Ovary (tissue), 10 donors: ENCODE measurements at regions of chr9 and their contacts with region 1.

Region 1: GRCh38 chr9:133715866-133716563 is 22.1 kb downstream of the SARDH start:
- DNase-seq: peak in 3 of 5 donors; percentile 44 to 58 (median 49)
- H3K4me3 ChIP-seq: no peak overlapping the region
- H3K27ac ChIP-seq: peak overlapping the region; percentile 18 to 54
- H3K4me1 ChIP-seq: peaks cover 18% of the 10 kb centered on the region
- H3K27me3 ChIP-seq: no peaks in the 10 kb centered on the region
- CTCF ChIP-seq: peak in 1 of 3 donors; percentile 43
- EP300 ChIP-seq: no peak
- POLR2A ChIP-seq: no peak

Region 2: DNA sequence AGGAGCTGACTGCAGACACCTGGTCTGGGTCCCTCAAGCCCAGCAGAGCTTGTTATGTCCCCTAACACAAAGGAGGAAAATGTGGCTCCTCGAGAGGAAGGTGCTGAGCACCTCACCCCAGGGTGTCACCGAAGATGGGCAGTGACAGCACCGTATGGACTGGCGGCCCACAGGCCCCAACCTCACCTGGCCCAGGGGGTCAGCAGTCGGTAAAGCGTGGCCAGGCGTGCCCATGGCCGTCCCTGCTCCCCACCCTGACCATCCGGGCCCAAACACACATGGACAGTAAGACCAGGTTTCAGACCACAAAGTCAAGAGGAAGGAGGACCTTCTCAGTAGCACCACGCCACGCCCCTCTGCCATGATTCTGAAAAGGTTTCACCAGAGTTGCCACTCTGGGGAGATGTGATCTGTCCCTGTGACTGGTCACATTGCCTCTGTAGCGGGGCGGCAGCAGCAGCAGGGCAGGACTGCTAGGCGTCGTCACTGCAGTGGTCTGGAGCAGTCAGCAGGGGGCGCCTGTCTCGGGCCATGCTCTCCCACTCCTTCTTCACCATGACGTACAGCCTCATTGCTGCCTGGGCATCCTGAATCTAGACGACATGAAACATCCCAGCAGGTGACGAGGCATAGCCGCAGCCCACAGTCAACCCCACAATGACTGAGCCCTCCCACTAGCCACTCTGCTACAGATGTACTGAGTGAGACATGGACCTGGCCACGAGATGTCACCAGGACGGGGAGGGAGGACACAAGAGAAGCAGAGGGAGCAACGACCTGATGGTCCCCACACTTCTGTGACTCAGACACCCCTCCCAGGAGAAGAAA is 309.3 kb before region 1 on chr9:
- intact Hi-C with region 1: loop called in 2 of 4 experiments (anchors 10 kb)
- DNase-seq: peak; percentile 53 to 79 (median 72)
- H3K4me3 ChIP-seq: no peak overlapping the region
- H3K27ac ChIP-seq: no peak overlapping the region
- H3K4me1 ChIP-seq: no peaks in the 10 kb centered on the region
- H3K27me3 ChIP-seq: no peaks in the 10 kb centered on the region
- CTCF ChIP-seq: peak; percentile 61 to 78 (median 73)
- EP300 ChIP-seq: no peak
- POLR2A ChIP-seq: no peak

Region 3: GRCh38 chr9:133509179-133510079 is 206.6 kb before region 1 on chr9:
- intact Hi-C with region 1: loop called in 1 of 4 experiments (anchors 10 kb)
- DNase-seq: peak in 1 of 5 donors; percentile 52
- H3K4me3 ChIP-seq: no peak overlapping the region
- H3K27ac ChIP-seq: no peak overlapping the region
- H3K4me1 ChIP-seq: peaks cover 27% of the 10 kb centered on the region
- H3K27me3 ChIP-seq: no peaks in the 10 kb centered on the region
- CTCF ChIP-seq: no peak
- EP300 ChIP-seq: no peak
- POLR2A ChIP-seq: no peak

Region 4: GRCh38 chr9:133589454-133590227 is 126.4 kb before region 1 on chr9:
- intact Hi-C with region 1: loop called in 1 of 4 experiments (anchors 10 kb)
- DNase-seq: no peak
- H3K4me3 ChIP-seq: no peak overlapping the region
- H3K27ac ChIP-seq: no peak overlapping the region
- H3K4me1 ChIP-seq: peaks cover 1% of the 10 kb centered on the region
- H3K27me3 ChIP-seq: no peaks in the 10 kb centered on the region
- CTCF ChIP-seq: no peak
- EP300 ChIP-seq: no peak
- POLR2A ChIP-seq: no peak

Region 5: GRCh38 chr9:133773889-133774655 is 58.1 kb after region 1 on chr9:
- intact Hi-C with region 1: no loop called
- DNase-seq: peak in 2 of 5 donors; percentile 7 to 12
- H3K4me3 ChIP-seq: no peak overlapping the region
- H3K27ac ChIP-seq: no peak overlapping the region
- H3K4me1 ChIP-seq: peaks cover 2% of the 10 kb centered on the region
- H3K27me3 ChIP-seq: no peaks in the 10 kb centered on the region
- CTCF ChIP-seq: no peak
- EP300 ChIP-seq: no peak
- POLR2A ChIP-seq: no peak